Caco-2 (cell line): ENCODE measurements at regions of chr6 and their contacts with region 1.

Region 1: DNA sequence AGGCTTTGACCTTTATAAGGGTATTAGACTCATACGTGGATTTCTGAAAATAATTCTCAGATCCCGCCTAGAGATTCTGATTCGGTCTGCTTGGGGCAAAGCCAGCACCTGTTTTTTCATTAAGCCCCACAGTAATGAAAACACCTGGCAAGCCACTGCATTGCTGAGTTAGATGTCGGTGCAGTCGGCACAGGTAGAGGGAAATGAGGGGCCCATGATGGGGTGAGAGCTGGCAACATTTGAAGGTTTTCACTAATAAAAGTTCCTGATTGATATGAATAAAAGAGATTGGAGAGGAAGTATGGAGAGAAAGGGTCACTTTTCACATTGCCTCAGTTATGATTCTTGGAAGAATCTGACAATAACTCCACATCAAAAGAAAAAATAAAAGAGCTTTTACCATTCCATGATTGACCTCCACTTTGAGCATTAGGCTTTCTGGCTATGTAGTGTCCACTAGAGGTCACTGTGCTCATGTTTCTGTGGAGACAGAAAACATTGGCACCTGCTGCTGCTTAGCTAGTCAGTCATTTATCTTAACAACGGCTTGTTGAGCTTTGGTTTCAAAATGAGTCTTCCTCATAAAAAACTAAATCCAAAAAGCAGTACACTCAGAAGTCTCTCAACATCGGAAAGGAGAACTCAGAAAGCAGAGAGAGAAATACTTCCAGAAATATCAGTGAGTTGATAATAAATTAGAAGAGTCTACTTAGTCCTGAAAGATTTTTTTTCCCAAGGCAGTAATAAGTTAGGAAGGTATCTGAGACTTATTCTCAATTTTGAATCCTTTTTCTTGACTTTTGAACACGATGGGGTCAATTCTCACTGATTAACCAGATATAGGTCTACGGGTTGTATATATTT is 53.3 kb upstream of the KLHL31 start:
- DNase-seq: peak; percentile 59 to 68
- H3K4me3 ChIP-seq: no peak overlapping the region
- H3K4me3 Mint-ChIP-seq: peak overlapping the region; percentile 28
- H3K27ac Mint-ChIP-seq: no peak overlapping the region
- H3K4me1 ChIP-seq: peaks cover 17% of the 10 kb centered on the region
- H3K4me1 Mint-ChIP-seq: peaks cover 22% of the 10 kb centered on the region
- H3K27me3 ChIP-seq: no peaks in the 10 kb centered on the region
- H3K27me3 Mint-ChIP-seq: no peaks in the 10 kb centered on the region
- CTCF ChIP-seq: peak; percentile 67 to 78

Region 2: DNA sequence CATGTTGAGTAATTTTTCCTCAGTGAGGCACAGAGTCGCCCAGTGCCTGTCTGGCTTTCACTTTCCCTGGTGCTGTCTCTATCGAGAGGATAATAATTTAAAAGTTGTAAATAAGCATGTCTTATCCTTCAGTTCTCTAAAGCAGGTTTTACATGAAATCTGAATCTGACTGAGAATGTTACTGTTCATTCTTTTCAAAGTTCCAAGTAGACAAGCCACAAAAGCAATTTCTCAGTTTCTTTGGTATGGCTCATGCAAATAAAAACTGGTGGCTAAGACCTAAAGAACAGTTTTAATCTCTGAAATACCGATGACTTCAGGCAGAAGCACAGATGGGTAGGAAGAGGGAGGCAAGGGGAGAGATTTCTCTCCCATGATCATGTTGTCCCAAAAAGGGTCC is 482.6 kb before region 1 on chr6:
- CTCF ChIA-PET with region 1: no interaction called
- POLR2A ChIA-PET with region 1: no interaction called
- intact Hi-C with region 1: no loop called
- DNase-seq: no peak
- H3K4me3 ChIP-seq: no peak overlapping the region
- H3K4me3 Mint-ChIP-seq: no peak overlapping the region
- H3K27ac Mint-ChIP-seq: no peak overlapping the region
- H3K4me1 ChIP-seq: no peaks in the 10 kb centered on the region
- H3K4me1 Mint-ChIP-seq: no peaks in the 10 kb centered on the region
- H3K27me3 ChIP-seq: no peaks in the 10 kb centered on the region
- H3K27me3 Mint-ChIP-seq: peaks cover 2% of the 10 kb centered on the region
- CTCF ChIP-seq: no peak

Region 3: DNA sequence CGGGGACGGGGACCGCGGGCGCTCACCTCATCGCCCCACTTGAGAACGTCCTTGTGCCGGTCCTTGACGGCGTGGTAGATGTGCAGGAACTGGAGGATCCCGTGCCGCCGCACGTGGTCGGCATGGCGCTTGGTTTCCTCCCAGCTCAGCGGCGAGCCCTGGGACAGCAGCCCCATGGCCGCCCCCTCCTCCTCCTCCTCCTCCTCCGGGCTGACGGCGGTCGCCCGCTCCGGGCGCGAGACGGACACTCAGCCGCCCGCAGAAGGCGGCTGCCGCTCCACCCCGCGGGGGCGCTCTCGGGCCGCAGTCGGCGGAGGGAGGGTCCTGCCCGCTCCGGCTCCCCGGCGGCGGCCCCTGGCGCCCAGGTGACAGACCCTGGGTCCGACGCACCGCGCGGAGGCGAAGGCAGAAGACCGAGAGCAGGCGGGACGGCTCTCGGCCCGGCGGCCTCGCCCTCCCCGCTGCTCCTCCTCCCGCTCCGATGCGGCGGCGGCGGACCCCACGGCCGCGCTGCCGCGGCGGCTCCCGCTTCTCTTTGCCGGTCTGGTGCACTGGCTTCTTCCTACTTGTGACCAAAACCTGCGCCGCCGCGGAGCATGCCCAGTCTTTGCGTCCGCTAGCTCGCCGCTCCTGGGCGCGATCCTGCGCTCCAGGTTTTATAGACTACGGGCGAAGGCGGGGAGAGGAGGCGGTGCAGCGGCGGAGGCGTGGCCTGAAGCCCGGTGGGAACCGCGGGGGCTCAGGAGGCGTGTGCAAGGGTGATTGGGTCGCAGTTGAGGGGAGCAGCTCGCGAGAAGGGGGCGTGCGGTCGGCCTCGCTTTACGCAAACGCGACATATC is 174.1 kb before region 1 on chr6 and contains the start of gene GCLC:
- CTCF ChIA-PET with region 1: interaction called, 6 read pairs
- POLR2A ChIA-PET with region 1: no interaction called
- intact Hi-C with region 1: loop called (anchors 2 kb)
- DNase-seq: peak; percentile 93 to 94
- H3K4me3 ChIP-seq: peak within 1 kb of the TSS; percentile 98
- H3K4me3 Mint-ChIP-seq: peak within 1 kb of the TSS; percentile 98
- H3K27ac Mint-ChIP-seq: peak within 1 kb of the TSS; percentile 94
- H3K4me1 ChIP-seq: peaks cover 14% of the 10 kb centered on the region
- H3K4me1 Mint-ChIP-seq: peaks cover 19% of the 10 kb centered on the region
- H3K27me3 ChIP-seq: no peaks in the 10 kb centered on the region
- H3K27me3 Mint-ChIP-seq: no peaks in the 10 kb centered on the region
- CTCF ChIP-seq: peak; percentile 42 to 75
- total RNA-seq, gene GCLC: 70.1 and 88.9 TPM in 2 replicates

Region 4: DNA sequence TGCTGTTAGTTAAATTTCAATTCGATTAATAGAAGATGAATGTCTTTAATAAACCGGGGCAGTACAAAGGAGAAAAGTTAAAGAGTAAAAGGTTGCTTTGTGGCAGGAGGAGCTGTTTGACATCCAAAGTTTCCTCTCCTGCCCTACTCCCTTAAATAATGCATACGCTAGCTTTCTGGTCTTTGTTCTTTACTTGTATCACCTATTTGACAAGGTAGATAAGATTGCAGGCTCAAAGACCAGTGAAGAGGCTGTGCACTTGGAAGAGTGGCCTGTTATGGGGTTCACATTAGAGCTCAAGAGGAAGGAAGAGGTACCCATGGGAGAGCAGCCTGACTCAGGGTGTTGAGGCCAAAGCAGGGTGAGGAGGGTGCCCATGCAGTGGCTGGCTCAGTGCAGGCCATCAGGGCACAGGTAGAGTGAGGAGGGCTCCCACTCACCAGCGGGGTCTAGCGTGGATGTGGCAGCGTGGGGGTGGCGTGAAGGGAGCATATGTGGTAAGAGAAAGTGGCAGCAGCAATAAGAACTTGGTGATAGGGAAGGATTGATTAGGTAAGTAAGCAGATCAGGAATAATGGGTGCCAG is 23.9 kb before region 1 on chr6:
- CTCF ChIA-PET with region 1: interaction called, 15 read pairs
- POLR2A ChIA-PET with region 1: no interaction called
- intact Hi-C with region 1: no loop called
- DNase-seq: no peak
- H3K4me3 ChIP-seq: no peak overlapping the region
- H3K4me3 Mint-ChIP-seq: no peak overlapping the region
- H3K27ac Mint-ChIP-seq: peak overlapping the region; percentile 12
- H3K4me1 ChIP-seq: peaks cover 22% of the 10 kb centered on the region
- H3K4me1 Mint-ChIP-seq: peaks cover 30% of the 10 kb centered on the region
- H3K27me3 ChIP-seq: no peaks in the 10 kb centered on the region
- H3K27me3 Mint-ChIP-seq: no peaks in the 10 kb centered on the region
- CTCF ChIP-seq: no peak

Region 5: GRCh38 chr6:53734473-53735299 is 15.9 kb after region 1 on chr6:
- CTCF ChIA-PET with region 1: interaction called, 19 read pairs
- POLR2A ChIA-PET with region 1: interaction called, 4 read pairs
- intact Hi-C with region 1: no loop called
- DNase-seq: peak; percentile 84 to 86
- H3K4me3 ChIP-seq: no peak overlapping the region
- H3K4me3 Mint-ChIP-seq: peak overlapping the region; percentile 58
- H3K27ac Mint-ChIP-seq: peak overlapping the region; percentile 88
- H3K4me1 ChIP-seq: peaks cover 84% of the 10 kb centered on the region
- H3K4me1 Mint-ChIP-seq: peaks cover 48% of the 10 kb centered on the region
- H3K27me3 ChIP-seq: no peaks in the 10 kb centered on the region
- H3K27me3 Mint-ChIP-seq: no peaks in the 10 kb centered on the region
- CTCF ChIP-seq: peak; percentile 65 to 71